Gastrocnemius medialis (tissue), 4 donors: ENCODE measurements at regions of chr4 and their contacts with region 1.

Region 1: DNA sequence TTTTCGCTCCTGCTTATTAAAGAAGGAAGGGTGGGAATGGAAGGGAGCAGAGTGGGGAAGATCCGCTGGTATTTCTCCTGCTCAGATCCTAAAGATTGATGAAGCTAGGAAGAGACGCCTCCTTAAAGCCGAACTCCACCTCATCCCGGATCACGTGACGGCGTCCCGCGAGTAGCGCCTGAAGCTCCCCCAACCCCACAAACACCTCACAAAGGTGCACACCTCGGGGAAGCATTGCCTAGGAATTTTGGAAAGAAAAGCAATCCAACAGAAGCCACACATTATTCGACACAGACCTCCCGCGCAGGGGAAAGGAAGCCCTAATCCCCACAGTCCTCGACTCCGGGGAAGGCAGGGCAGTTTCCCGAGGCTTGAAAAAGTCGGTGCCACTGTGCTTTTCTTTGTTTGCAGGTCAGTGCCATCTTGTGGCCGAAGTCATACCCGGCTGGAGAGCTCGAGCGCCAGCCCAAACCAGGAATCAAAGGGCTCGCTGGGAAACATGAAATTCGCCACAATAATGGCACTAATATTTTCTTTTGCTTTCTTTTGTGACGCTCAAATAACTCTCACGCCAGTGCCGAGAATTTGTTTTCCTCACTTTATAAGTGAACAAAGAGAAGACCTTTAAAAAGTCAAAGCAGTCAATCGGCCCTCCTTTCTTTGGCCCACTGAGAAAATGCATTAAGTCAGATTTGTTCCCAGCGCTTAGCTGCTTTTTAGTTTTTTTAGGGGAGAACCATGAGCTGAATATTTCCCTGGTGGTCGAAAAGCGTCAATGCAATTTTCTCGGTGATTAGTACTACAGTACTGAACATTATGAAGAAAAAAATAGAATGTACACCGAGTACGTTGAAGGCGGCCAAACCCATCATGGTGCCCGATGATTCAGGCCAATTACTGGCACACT is at the start of gene NPY1R:
- DNase-seq: peak; percentile 43 to 47
- ATAC-seq: peak; percentile 94 to 95
- H3K4me3 ChIP-seq: peak within 1 kb of the TSS; percentile 55 to 91 (median 68)
- H3K27ac ChIP-seq: peak within 1 kb of the TSS in 2 of 4 donors; percentile 8 to 17
- H3K4me1 ChIP-seq: peaks cover 5 to 14% of the 10 kb centered on the region in 2 donors
- H3K27me3 ChIP-seq: peaks cover 0 to 7% (median 6%) of the 10 kb centered on the region in 3 donors
- CTCF ChIP-seq: peak; percentile 42 to 79 (median 53)
- POLR2A ChIP-seq: no peak
- total RNA-seq, gene NPY1R: 0.40 to 3.1 (median 1.3) TPM

Region 2: DNA sequence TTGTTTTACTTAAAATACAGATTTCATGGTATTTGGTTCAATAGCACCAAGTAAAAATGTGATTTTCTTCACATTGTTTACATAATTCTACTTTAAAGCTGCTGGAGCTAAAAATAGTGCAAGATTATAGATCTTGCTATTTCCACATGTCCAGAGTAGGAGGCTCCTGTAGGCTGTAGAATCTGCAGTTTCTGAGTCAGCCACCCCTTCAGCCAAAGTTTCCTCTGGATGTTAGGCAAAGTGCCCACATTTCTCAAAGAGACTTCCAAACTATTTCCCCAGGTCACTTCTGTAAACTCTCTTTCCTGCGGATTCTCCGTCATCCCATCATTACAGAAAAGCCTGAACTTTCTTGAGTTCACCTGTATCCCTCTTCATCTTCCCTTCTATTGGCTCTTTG is 826.5 kb before region 1 on chr4:
- in situ Hi-C with region 1: loop called in 1 of 4 experiments (anchors 10 kb)
- intact Hi-C with region 1: no loop called
- DNase-seq: no peak
- ATAC-seq: no peak
- H3K4me3 ChIP-seq: no peak overlapping the region
- H3K27ac ChIP-seq: no peak overlapping the region
- H3K4me1 ChIP-seq: no peaks in the 10 kb centered on the region
- H3K27me3 ChIP-seq: no peaks in the 10 kb centered on the region
- CTCF ChIP-seq: no peak
- POLR2A ChIP-seq: no peak

Region 3: DNA sequence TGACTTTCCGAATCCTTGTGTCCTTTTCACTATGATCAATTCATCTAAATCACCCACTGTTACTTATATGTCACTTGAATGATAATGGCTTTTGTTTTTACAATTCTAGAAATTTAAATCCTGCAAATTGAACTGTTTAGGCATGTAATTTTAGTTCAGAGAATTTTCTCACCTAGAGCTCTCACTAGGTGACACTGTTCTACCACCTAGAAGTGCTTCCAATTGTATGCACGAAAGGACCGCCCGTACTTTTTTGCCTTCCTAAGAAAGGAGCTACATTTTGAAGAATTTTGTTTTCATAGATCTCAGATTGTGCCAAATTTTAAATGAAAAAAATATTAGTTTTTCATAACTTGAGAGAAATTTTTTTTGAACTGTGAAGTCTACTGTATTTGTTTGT is 687.4 kb before region 1 on chr4:
- in situ Hi-C with region 1: no loop called
- intact Hi-C with region 1: loop called (anchors 5 kb)
- DNase-seq: no peak
- ATAC-seq: no peak
- H3K4me3 ChIP-seq: no peak overlapping the region
- H3K27ac ChIP-seq: no peak overlapping the region
- H3K4me1 ChIP-seq: no peaks in the 10 kb centered on the region
- H3K27me3 ChIP-seq: no peaks in the 10 kb centered on the region
- CTCF ChIP-seq: peak in 2 of 5 experiments; percentile 23 to 55
- POLR2A ChIP-seq: no peak

Region 4: DNA sequence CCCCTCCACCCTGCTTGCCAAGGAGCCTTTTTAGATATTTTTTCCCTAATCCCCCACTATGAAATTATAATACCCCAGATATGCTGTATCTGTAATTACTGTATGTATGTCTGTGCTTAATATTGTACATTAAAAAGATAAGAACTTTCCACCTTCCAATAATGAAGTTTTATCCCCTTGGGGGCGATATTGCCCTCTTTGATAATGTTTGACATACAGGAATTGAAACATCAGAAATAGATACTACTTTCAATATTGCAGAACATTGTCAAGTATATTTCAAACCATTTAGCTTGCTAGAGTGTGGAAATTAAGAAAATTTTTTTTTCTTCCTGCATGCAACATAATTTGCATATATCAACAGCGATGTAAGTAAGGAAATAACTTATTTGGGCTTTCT is 225.0 kb before region 1 on chr4:
- in situ Hi-C with region 1: loop called in 2 of 4 experiments (anchors 25 kb)
- intact Hi-C with region 1: loop called (anchors 2 kb)
- DNase-seq: no peak
- ATAC-seq: no peak
- H3K4me3 ChIP-seq: no peak overlapping the region
- H3K27ac ChIP-seq: no peak overlapping the region
- H3K4me1 ChIP-seq: no peaks in the 10 kb centered on the region
- H3K27me3 ChIP-seq: no peaks in the 10 kb centered on the region
- CTCF ChIP-seq: no peak
- POLR2A ChIP-seq: no peak

Region 5: DNA sequence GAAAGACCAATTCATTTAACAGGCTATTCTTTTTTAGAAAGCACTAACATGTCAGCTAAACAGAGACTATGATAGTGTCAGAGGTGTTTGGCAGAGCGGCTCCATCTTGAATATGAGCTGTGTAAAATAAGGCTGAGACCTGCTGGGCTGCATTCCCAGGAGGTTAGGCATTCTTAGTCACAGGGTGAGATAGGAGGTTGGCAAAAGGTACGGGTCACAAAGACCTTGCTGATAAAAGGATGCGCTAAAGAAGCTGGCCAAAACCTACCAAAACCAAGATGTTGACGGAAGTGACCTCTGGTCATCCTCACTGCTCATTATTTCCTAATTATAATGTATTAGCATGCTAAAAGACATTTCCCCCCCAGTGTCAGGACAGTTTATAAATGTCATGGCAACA is 52.8 kb after region 1 on chr4:
- in situ Hi-C with region 1: no loop called
- intact Hi-C with region 1: no loop called
- DNase-seq: no peak
- ATAC-seq: no peak
- H3K4me3 ChIP-seq: no peak overlapping the region
- H3K27ac ChIP-seq: no peak overlapping the region
- H3K4me1 ChIP-seq: no peaks in the 10 kb centered on the region
- H3K27me3 ChIP-seq: no peaks in the 10 kb centered on the region
- CTCF ChIP-seq: no peak
- POLR2A ChIP-seq: no peak

Region 6: GRCh38 chr4:163638909-163639308 is 306.2 kb after region 1 on chr4:
- in situ Hi-C with region 1: no loop called
- intact Hi-C with region 1: no loop called
- DNase-seq: no peak
- ATAC-seq: no peak
- H3K4me3 ChIP-seq: no peak overlapping the region
- H3K27ac ChIP-seq: no peak overlapping the region
- H3K4me1 ChIP-seq: no peaks in the 10 kb centered on the region
- H3K27me3 ChIP-seq: no peaks in the 10 kb centered on the region
- CTCF ChIP-seq: no peak
- POLR2A ChIP-seq: no peak